Posterior cingulate gyrus (tissue), 11 donors: ENCODE measurements at regions of chr4 and their contacts with region 1.

Region 1: DNA sequence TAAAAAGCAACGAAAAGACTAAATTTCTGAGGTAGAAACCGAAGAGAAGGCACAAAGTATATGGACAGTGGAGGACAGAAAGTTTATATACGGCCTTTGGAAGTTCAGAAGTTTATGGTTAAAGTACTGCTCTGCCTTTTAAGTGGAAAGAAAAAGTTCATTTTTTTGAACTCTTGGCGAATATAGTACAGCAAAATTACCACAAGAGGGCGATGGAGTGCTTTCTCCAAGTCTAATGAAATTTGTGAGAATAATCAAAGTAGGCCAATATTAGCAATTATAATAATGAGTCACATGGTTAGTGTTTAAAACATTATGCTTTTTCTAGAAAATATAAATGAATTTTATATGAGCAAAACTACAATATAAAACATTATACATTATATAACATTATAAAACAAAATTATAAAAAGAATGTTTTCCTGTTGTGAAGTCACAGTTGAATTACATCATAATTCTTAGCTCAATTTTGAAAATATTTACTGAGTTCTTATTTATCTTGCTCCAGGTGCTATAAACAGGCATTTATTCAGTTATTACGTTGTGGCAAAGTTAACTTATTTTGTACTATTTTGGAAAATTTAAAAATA is 136.2 kb upstream of the BMPR1B start:
- DNase-seq: no peak

Region 2: GRCh38 chr4:94349193-94349592 is 272.4 kb before region 1 on chr4:
- intact Hi-C with region 1: no loop called
- DNase-seq: no peak

Region 3: DNA sequence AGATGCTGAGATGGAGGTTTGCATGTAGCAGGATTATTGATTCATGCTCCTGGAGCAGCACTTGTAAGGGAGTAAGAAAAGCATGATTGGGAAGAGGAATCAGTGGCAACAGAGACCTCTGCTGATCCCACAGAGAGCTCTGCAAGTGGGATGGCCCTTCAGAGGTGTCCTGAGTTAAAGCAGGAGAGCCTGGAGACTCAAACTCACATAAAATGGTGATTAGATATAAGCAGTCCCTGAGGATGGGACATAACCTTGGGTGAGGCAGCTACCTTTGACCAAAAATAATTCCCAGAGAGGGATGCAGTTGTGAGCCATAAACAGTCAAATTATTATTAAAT is 110.7 kb after region 1 on chr4:
- intact Hi-C with region 1: loop called (anchors 5 kb)
- DNase-seq: no peak

Region 4: DNA sequence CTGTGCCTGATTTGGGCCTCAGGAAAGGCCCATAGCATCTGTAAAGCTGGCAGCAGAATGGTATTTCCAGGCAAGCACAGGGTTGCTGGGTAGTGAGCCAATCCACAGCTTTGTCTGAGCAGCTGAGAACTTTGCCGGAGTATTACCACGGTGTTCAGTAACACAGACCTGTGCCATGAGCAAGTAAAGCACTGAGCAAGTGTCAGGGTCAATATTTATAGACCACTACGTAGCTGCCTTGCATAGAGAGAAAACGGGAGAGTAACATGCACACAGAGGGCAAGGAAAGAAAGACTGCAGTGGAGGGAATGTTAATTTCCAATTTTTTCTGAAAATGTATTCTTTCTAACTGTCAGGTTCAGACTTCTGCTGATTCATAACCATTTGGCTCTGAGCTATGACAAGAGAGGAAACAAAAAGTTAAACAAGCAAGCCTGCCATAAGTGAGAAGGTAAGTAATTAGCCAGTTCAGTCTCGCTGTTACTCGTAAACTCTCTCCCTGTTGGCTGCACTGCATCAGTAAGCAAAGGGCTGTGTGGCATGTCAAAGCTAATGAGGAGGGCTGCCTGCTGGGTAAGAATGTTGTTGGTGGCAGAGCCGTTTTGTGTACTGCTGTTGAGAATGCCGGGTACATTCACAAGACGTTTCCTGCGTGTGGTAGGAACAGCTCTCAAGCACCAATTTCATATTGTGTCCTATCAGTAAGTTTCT is 374.3 kb after region 1 on chr4:
- intact Hi-C with region 1: no loop called
- DNase-seq: peak in 5 of 10 donors; percentile 8 to 67 (median 10)

Region 5: GRCh38 chr4:95124906-95125504 is 503.4 kb after region 1 on chr4:
- intact Hi-C with region 1: loop called (anchors 2 kb)
- DNase-seq: peak in 4 of 10 donors; percentile 12 to 18 (median 14)

Region 6: GRCh38 chr4:95362906-95363558 is 741.4 kb after region 1 on chr4:
- intact Hi-C with region 1: no loop called
- DNase-seq: peak in 3 of 10 donors; percentile 30 to 86 (median 50)